AG04450 (cell line): ENCODE measurements at regions of chr1 and their contacts with region 1.

Region 1: GRCh38 chr1:68442822-68443556 is 6.8 kb downstream of the RPE65 start:
- DNase-seq: peak; percentile 36
- H3K4me3 ChIP-seq: no peak overlapping the region
- H3K27ac ChIP-seq: no peak overlapping the region
- H3K27me3 ChIP-seq: no peaks in the 10 kb centered on the region
- CTCF ChIP-seq: peak; percentile 81

Region 2: DNA sequence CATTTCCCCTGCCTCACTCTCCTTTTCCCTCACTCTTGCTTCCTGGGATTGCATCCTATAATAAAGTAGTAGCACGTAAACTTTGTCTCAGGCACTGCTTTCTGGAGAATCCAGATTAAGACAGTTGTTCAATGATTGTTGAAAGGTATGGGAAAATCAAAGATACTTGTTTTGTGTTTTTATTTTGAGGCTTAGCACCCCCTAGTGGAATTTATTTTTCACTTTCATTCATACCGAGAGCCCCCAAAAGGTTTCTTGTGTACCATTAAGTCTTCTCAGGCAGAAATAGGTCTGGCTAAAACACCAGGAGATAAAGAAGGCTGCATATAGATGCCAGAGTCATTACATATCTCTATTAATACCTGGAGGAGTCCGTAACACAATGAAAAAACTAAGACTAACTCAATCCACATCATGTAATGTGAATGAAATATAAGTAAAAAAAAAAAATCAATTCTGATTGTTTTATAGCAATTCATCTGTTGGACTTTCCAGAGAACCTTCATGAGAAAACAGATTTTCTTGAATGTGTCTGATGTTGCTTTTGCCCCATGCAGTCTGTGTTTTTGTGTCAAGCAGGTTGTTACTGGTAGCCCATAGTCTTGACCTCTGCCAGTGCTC is 96.7 kb before region 1 on chr1:
- CTCF ChIA-PET with region 1: interaction called, 24 read pairs
- POLR2A ChIA-PET with region 1: no interaction called
- DNase-seq: no peak
- H3K4me3 ChIP-seq: no peak overlapping the region
- H3K27ac ChIP-seq: no peak overlapping the region
- H3K27me3 ChIP-seq: no peaks in the 10 kb centered on the region
- CTCF ChIP-seq: peak; percentile 57

Region 3: GRCh38 chr1:68409426-68409825 is 33.6 kb before region 1 on chr1:
- CTCF ChIA-PET with region 1: interaction called, 21 read pairs
- POLR2A ChIA-PET with region 1: no interaction called
- DNase-seq: peak; percentile 43
- H3K4me3 ChIP-seq: no peak overlapping the region
- H3K27ac ChIP-seq: no peak overlapping the region
- H3K27me3 ChIP-seq: no peaks in the 10 kb centered on the region
- CTCF ChIP-seq: no peak

Region 4: GRCh38 chr1:68429233-68429808 is 13.7 kb before region 1 on chr1:
- CTCF ChIA-PET with region 1: interaction called, 28 read pairs
- POLR2A ChIA-PET with region 1: no interaction called
- DNase-seq: no peak
- H3K4me3 ChIP-seq: no peak overlapping the region
- H3K27ac ChIP-seq: no peak overlapping the region
- H3K27me3 ChIP-seq: no peaks in the 10 kb centered on the region
- CTCF ChIP-seq: no peak

Region 5: GRCh38 chr1:68459796-68460195 is 16.8 kb after region 1 on chr1:
- CTCF ChIA-PET with region 1: interaction called, 94 read pairs
- POLR2A ChIA-PET with region 1: no interaction called
- DNase-seq: no peak
- H3K4me3 ChIP-seq: no peak overlapping the region
- H3K27ac ChIP-seq: no peak overlapping the region
- H3K27me3 ChIP-seq: no peaks in the 10 kb centered on the region
- CTCF ChIP-seq: no peak

Region 6: GRCh38 chr1:68485431-68486022 is 42.5 kb after region 1 on chr1:
- CTCF ChIA-PET with region 1: interaction called, 21 read pairs
- POLR2A ChIA-PET with region 1: no interaction called
- DNase-seq: no peak
- H3K4me3 ChIP-seq: no peak overlapping the region
- H3K27ac ChIP-seq: no peak overlapping the region
- H3K27me3 ChIP-seq: no peaks in the 10 kb centered on the region
- CTCF ChIP-seq: no peak

Region 7: GRCh38 chr1:68542586-68542985 is 99.6 kb after region 1 on chr1:
- CTCF ChIA-PET with region 1: no interaction called
- POLR2A ChIA-PET with region 1: no interaction called
- DNase-seq: no peak
- H3K4me3 ChIP-seq: no peak overlapping the region
- H3K27ac ChIP-seq: no peak overlapping the region
- H3K27me3 ChIP-seq: no peaks in the 10 kb centered on the region
- CTCF ChIP-seq: no peak

Region 8: GRCh38 chr1:68633141-68633919 is 190.3 kb after region 1 on chr1:
- CTCF ChIA-PET with region 1: no interaction called
- POLR2A ChIA-PET with region 1: no interaction called
- DNase-seq: no peak
- H3K4me3 ChIP-seq: no peak overlapping the region
- H3K27ac ChIP-seq: no peak overlapping the region
- H3K27me3 ChIP-seq: no peaks in the 10 kb centered on the region
- CTCF ChIP-seq: no peak